Psoas muscle (tissue), 8 donors: ENCODE measurements at regions of chr19 and their contacts with region 1.

Region 1: GRCh38 chr19:49073514-49074378 is 1.2 kb upstream of the KCNA7 start:
- DNase-seq: peak; percentile 74 to 79
- ATAC-seq: peak; percentile 82 to 86 (median 84)
- H3K4me3 ChIP-seq: peak overlapping the region; percentile 47
- H3K27ac ChIP-seq: peak overlapping the region; percentile 77
- H3K4me1 ChIP-seq: peaks cover 3% of the 10 kb centered on the region
- H3K27me3 ChIP-seq: peaks cover 0 to 4% (median 0%) of the 10 kb centered on the region in 3 donors
- CTCF ChIP-seq: peak; percentile 51

Region 2: DNA sequence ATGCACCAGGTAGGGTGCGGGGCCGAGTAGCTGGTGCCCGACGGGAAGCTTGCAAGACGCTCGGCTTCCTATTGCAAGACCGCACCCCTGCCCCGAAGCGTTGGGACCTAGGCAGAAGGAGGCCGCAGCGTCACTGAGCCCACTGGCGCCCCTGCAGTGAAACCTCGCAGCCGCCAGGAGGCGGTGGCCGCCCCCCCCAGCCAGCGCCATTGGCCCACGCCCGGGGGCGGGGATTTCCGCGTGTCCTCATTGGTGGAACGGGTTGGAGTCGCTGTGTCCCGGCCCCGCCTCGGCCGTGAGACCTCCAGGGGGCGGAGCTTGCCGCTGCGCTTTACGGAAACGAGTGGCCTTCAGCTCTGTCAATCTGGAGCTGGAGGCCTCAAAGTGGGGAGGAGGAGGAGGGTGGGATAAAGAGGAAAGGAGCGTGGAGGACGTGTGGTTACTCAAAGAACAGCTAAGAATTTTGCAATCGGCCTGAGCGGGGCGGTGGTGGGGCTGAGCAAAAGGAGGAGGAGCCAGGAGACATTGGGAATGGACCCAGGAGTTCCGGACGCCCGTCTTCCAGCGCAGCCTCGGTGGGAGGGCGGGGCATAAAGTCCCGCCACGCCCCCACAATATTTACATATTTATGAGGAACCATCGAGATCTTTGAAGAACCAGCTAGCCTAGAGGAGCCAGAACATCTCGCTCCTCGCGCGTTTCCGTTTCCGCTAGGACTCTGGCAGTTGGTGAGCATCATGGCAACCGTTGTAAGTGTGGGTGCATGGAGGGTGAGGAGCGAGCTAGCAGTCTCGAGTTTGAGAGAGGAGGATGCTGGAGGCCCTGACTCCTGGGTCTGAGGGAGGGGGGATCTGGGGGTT is 80.3 kb before region 1 on chr19 and contains the starts of genes GYS1 and RUVBL2:
- intact Hi-C with region 1: loop called (anchors 5 kb)
- DNase-seq: peak; percentile 100
- ATAC-seq: peak; percentile 83 to 87 (median 84)
- H3K4me3 ChIP-seq: peak within 1 kb of the TSS; percentile 81
- H3K27ac ChIP-seq: peak within 1 kb of the TSS; percentile 90
- H3K4me1 ChIP-seq: peaks cover 48% of the 10 kb centered on the region
- H3K27me3 ChIP-seq: no peaks in the 10 kb centered on the region
- CTCF ChIP-seq: peak; percentile 97
- total RNA-seq, gene GYS1: 147 to 331 (median 238) TPM
- total RNA-seq, gene RUVBL2: 61.1 to 87.4 (median 81.8) TPM

Region 3: GRCh38 chr19:49020931-49021895 is 52.5 kb before region 1 on chr19:
- intact Hi-C with region 1: no loop called
- DNase-seq: no peak
- ATAC-seq: no peak
- H3K4me3 ChIP-seq: no peak overlapping the region
- H3K27ac ChIP-seq: no peak overlapping the region
- H3K4me1 ChIP-seq: peaks cover 7% of the 10 kb centered on the region
- H3K27me3 ChIP-seq: no peaks in the 10 kb centered on the region
- CTCF ChIP-seq: no peak

Region 4: DNA sequence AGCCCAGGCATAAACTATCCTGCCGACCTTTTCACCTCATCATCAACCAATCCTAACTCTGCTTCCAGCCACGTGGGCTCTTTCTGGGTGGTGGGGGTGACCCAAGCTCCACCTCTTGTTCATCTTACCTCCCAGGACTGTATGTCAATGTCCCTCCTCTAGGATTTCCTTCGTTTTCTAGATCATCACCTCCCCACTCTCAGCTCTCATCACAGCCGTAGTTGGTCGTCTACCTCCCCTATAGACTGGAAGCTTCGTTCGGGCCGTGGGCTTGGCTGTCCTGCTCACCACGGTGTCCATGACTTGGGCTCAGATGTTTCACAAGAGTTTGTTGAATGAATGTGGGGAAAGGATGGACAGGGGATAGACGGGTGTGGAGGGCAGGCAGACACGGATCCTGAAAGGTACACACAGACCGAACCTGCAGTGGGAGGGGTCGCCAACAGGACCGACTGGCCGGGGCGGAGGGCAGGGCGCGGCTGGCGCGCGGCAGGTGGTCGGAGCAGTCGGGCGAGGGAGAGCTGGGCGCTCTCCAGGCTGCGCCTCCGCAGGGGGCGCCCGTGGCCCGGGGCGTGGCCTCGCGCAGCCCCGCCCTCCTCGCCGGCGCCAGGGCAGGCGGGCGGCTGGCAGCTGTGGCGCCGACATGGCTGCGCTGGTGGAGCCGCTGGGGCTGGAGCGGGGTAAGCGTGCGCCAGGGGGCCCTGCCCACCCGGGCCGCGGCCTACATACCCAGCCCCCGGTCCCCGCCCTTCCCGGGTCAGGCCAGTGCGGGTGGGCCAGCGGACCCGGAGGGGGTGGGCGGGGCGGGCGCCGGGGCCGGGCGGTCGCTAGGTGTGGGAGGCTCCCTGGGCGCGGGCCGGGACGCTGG is 40.2 kb after region 1 on chr19 and contains the start of gene LIN7B:
- intact Hi-C with region 1: no loop called
- DNase-seq: peak; percentile 65 to 81
- ATAC-seq: peak; percentile 73 to 76 (median 74)
- H3K4me3 ChIP-seq: peak within 1 kb of the TSS; percentile 93
- H3K27ac ChIP-seq: peak within 1 kb of the TSS; percentile 83
- H3K4me1 ChIP-seq: peaks cover 36% of the 10 kb centered on the region
- H3K27me3 ChIP-seq: no peaks in the 10 kb centered on the region
- CTCF ChIP-seq: peak; percentile 66
- total RNA-seq, gene LIN7B: 11.8 to 27.9 (median 22.3) TPM

Region 5: GRCh38 chr19:49331616-49332055 is 257.9 kb after region 1 on chr19:
- intact Hi-C with region 1: no loop called
- DNase-seq: no peak
- ATAC-seq: peak; percentile 60 to 85 (median 83)
- H3K4me3 ChIP-seq: no peak overlapping the region
- H3K27ac ChIP-seq: no peak overlapping the region
- H3K4me1 ChIP-seq: no peaks in the 10 kb centered on the region
- H3K27me3 ChIP-seq: no peaks in the 10 kb centered on the region
- CTCF ChIP-seq: no peak